Aorta (tissue), 5 donors: ENCODE measurements at regions of chr1 and their contacts with region 1.

Region 1: GRCh38 chr1:55375617-55376258 is 160.6 kb upstream of the USP24 start:
- DNase-seq: no peak
- ATAC-seq: peak; percentile 69
- H3K4me3 ChIP-seq: no peak overlapping the region
- H3K27ac ChIP-seq: no peak overlapping the region
- H3K4me1 ChIP-seq: no peaks in the 10 kb centered on the region
- H3K27me3 ChIP-seq: no peaks in the 10 kb centered on the region

Region 2: DNA sequence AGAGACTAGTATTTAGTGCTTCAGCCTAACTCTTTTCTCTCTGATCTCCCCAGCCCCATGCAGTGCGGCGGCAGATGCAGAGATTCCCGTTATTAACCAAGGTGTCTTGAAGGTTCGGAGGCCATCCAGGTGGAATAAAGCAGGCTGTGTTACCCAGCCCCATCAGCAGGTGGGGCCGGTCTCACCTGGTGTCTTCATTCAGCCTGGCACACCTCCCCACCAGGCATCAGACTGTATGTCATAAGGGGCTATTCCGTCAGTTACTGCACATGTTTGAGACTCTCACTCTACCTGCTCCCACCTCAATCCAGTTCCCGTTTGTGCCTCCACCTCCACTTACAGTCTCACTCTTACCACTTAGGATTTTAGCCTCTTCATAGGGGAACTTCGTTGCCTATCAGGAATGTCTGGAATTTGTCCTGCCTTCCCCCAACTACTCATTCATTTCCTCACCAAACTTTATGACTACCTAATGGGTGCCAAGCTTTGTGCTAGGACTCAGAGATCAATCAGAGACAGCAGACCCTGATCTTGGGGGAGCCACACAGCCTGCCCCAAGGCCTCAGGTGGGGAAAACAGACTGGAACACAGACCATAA is 1033.5 kb after region 1 on chr1:
- intact Hi-C with region 1: loop called in 1 of 2 experiments (anchors 10 kb)
- DNase-seq: no peak
- ATAC-seq: no peak
- H3K4me3 ChIP-seq: no peak overlapping the region
- H3K27ac ChIP-seq: no peak overlapping the region
- H3K4me1 ChIP-seq: peaks cover 0 to 6% of the 10 kb centered on the region in 2 donors
- H3K27me3 ChIP-seq: no peaks in the 10 kb centered on the region